ENCODE measurements at regions of chr6 and their contacts with region 1.

Region 1: GRCh38 chr6:52063584-52064344 is 23.6 kb downstream of the PKHD1 start:
- DNase-seq: peak; percentile 48 to 63
- H3K4me3 ChIP-seq: no peak overlapping the region
- H3K4me3 Mint-ChIP-seq: no peak overlapping the region
- H3K27ac Mint-ChIP-seq: peak overlapping the region; percentile 59
- H3K4me1 ChIP-seq: 0 out of 2 replicates have a peak, but pooled peaks cover 4% of the 10 kb centered on the region
- H3K4me1 Mint-ChIP-seq: peaks cover 7% of the 10 kb centered on the region
- H3K27me3 ChIP-seq: no peaks in the 10 kb centered on the region
- H3K27me3 Mint-ChIP-seq: no peaks in the 10 kb centered on the region
- CTCF ChIP-seq: peak; percentile 55 to 71

Region 2: GRCh38 chr6:52024451-52025068 is 39.2 kb before region 1 on chr6:
- CTCF ChIA-PET with region 1: no interaction called
- POLR2A ChIA-PET with region 1: no interaction called
- intact Hi-C with region 1: no loop called
- DNase-seq: no peak
- H3K4me3 ChIP-seq: no peak overlapping the region
- H3K4me3 Mint-ChIP-seq: no peak overlapping the region
- H3K27ac Mint-ChIP-seq: no peak overlapping the region
- H3K4me1 ChIP-seq: peaks cover 8% of the 10 kb centered on the region
- H3K4me1 Mint-ChIP-seq: peaks cover 7% of the 10 kb centered on the region
- H3K27me3 ChIP-seq: no peaks in the 10 kb centered on the region
- H3K27me3 Mint-ChIP-seq: no peaks in the 10 kb centered on the region
- CTCF ChIP-seq: no peak

Region 3: DNA sequence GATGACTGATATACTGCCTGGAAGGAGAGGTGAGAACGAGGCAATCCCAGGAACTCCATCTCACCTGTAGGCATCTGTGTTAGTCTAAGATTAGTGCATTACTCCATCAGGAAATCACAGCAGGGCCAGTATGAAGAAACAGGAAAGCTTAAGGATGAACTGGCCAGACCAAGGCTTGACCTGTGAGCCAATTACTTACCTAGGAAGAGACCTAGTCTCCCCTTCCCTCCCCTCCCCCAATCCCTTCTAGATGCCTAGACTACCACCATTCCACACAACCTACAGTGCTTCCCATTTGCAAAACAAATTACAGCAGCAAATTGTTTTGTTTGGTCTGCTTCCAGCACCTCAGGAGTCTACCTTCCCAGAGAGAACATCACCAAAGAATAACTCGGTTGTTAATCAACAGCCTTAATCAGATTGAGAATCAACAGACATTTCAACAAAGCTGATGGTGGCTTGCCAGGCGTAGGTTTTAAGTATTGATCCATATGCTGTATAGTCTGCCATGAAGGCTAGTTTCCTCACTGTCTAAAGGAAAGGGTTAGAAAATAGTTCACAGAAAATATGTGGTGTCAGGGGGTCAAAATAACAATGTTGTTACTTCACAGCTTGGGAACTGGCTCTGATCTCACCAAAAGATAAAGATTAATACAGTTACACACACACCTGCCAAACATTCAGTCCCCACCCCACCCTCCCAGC is 13.6 kb after region 1 on chr6:
- CTCF ChIA-PET with region 1: no interaction called
- POLR2A ChIA-PET with region 1: no interaction called
- intact Hi-C with region 1: no loop called
- DNase-seq: no peak
- H3K4me3 ChIP-seq: no peak overlapping the region
- H3K4me3 Mint-ChIP-seq: no peak overlapping the region
- H3K27ac Mint-ChIP-seq: no peak overlapping the region
- H3K4me1 ChIP-seq: no peaks in the 10 kb centered on the region
- H3K4me1 Mint-ChIP-seq: no peaks in the 10 kb centered on the region
- H3K27me3 ChIP-seq: no peaks in the 10 kb centered on the region
- H3K27me3 Mint-ChIP-seq: no peaks in the 10 kb centered on the region
- CTCF ChIP-seq: no peak

Region 4: GRCh38 chr6:52263709-52264540 is 200.2 kb after region 1 on chr6:
- CTCF ChIA-PET with region 1: no interaction called
- POLR2A ChIA-PET with region 1: no interaction called
- intact Hi-C with region 1: loop called (anchors 1 kb)
- DNase-seq: peak; percentile 54 to 72
- H3K4me3 ChIP-seq: no peak overlapping the region
- H3K4me3 Mint-ChIP-seq: no peak overlapping the region
- H3K27ac Mint-ChIP-seq: no peak overlapping the region
- H3K4me1 ChIP-seq: no peaks in the 10 kb centered on the region
- H3K4me1 Mint-ChIP-seq: no peaks in the 10 kb centered on the region
- H3K27me3 ChIP-seq: no peaks in the 10 kb centered on the region
- H3K27me3 Mint-ChIP-seq: no peaks in the 10 kb centered on the region
- CTCF ChIP-seq: peak; percentile 83 to 91